Testis (tissue), 5 donors: ENCODE measurements at regions of chrX and their contacts with region 1.

Region 1: DNA sequence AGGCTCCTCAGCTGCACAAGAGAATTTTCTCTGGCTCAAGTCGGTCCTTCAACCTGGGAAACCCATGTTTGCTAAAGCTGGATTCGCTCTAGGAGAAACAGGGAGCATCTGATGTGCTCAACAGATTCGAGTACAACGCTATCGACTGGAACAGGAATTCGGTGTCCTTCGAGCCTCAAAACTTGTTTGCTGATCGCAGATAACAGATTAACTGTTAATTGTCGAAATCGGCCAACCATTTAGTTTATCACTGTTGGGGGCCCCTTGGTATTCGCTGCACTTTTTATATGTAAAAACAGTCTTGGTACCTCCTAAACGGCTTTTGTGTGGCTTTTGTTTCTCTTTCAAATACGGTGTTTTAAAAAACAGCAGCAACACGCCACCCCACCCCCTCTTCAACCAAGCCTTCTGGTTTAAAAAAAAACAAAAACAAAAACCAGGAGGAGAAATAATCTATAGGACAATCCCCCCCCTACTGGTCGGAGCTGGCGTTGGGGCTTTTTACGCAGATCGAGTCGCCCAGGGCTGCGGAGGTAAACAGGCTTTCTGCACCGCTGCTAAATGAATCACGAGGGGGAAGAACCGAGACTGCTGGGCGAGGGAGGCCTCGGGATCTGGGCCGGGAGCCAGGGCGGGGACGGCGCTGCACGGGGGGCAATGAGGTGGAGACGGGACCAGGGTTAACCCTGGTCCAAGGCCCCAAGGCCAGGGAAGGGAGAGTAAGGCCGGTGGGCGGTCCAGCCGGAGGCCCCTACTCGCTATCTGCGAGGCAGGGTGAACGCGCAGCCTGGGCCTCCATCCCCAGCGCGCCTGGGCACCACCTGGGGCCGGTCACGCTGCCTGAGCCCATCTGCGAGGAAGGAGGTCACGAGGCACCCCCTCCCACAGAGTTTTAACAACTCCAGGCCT is 71.7 kb upstream of the BCOR start:
- DNase-seq: peak; percentile 79
- H3K4me3 ChIP-seq: no peak overlapping the region
- H3K27ac ChIP-seq: peak overlapping the region in 1 of 2 donors; percentile 31
- H3K4me1 ChIP-seq: no peaks in the 10 kb centered on the region
- H3K27me3 ChIP-seq: no peaks in the 10 kb centered on the region
- CTCF ChIP-seq: peak in 1 of 3 experiments; percentile 25
- POLR2A ChIP-seq: no peak

Region 2: DNA sequence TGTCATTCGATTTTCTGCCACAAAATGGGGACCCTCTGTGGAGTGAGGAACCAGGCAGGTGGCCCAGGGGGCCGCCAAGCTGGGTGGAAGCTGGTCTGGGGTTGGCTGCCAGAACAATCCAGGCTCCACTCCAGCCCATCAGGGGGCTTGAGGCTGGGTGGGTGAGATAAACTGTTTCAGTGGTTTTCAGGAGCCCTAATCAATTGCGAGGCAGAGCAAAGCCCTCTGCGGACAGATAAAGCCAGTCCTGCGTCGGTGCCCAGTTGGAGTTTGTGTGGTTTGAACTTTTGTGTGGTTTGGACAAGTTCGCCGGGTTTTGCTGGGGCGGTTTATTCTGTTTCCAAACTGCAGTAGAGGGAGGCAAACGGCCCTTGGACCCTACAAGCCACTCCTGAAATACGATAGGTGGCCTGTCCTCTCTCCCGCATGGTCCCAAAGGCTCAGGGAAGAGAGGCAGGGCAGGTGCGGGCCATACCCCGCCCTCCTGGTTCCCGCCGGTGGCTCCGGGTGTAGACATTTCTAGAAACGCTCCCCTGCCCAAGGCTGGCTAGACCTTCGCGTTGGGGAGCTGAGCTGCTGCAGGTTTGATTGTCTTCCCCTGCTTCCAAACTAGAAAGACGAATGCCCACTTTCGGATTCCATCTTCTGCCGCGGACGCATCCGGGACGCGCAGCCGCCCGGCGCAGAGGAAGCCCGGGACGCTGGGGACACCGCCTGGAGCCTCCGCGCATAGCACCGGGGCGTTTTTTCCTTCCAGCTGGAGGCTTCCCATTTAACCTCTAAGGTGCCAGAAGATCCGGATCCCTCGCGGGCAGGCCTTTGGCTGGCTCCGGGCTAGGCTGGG is 97.3 kb after region 1 on chrX:
- intact Hi-C with region 1: loop called (anchors 10 kb)
- DNase-seq: peak; percentile 52
- H3K4me3 ChIP-seq: peak overlapping the region; percentile 31 to 53
- H3K27ac ChIP-seq: peak overlapping the region; percentile 24 to 50
- H3K4me1 ChIP-seq: peaks cover 3% of the 10 kb centered on the region
- H3K27me3 ChIP-seq: no peaks in the 10 kb centered on the region
- CTCF ChIP-seq: peak; percentile 36 to 44 (median 41)
- POLR2A ChIP-seq: no peak